Cardiac septum (tissue), 1 donor: ENCODE measurements at regions of chrX and their contacts with region 1.

Region 1: GRCh38 chrX:48801280-48802088 is at the start of gene HDAC6:
- DNase-seq: peak; percentile 97
- total RNA-seq, gene HDAC6: 33.7 TPM

Region 2: DNA sequence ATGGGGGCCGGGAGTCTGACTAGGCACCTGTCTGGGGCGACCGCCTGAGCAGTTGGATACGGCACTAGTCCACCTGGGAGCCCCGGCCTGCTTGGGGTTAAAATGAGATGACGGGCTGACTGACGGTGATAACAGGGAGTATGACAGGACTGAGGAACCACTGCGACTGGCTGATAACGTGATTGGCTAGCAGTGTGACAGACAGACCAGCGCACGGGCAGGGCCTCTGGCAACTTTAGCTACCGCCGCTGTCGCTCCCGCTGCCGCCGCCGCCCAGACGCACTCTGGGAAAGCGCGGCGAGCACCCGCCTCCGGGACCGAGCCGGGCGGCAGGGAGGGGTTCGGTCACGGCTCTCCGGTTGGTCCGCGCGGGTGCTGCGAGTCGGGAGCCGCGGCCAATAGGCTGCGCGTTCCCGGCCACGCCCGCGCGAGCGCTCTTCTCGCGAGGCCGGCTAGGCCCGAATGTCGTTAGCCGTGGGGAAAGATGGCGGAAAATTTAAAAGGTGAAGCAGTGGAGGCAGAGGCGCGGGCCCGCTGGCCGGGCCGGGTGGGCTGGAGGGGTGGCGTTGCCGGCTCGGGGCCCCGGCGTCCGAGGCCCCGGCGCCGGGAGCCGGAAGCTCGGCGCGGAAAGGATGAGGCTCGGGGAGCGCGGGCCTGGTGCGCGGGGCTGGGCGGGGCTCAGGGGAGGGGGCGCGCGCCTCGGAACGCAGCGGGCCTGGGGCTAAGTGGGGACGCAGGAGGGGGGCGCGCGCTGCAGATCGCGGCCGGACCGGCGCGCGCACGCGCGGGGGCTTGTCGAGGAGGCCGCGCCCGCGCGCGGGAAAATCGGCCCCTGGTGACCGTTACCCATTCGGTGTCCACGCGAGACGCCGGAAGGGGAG is 104.9 kb before region 1 on chrX and contains the start of gene SUV39H1:
- intact Hi-C with region 1: loop called (anchors 10 kb)
- DNase-seq: peak; percentile 94
- total RNA-seq, gene SUV39H1: 2.5 TPM

Region 3: GRCh38 chrX:48737213-48737938 is 64.1 kb before region 1 on chrX:
- intact Hi-C with region 1: loop called (anchors 5 kb)
- DNase-seq: peak; percentile 94

Region 4: DNA sequence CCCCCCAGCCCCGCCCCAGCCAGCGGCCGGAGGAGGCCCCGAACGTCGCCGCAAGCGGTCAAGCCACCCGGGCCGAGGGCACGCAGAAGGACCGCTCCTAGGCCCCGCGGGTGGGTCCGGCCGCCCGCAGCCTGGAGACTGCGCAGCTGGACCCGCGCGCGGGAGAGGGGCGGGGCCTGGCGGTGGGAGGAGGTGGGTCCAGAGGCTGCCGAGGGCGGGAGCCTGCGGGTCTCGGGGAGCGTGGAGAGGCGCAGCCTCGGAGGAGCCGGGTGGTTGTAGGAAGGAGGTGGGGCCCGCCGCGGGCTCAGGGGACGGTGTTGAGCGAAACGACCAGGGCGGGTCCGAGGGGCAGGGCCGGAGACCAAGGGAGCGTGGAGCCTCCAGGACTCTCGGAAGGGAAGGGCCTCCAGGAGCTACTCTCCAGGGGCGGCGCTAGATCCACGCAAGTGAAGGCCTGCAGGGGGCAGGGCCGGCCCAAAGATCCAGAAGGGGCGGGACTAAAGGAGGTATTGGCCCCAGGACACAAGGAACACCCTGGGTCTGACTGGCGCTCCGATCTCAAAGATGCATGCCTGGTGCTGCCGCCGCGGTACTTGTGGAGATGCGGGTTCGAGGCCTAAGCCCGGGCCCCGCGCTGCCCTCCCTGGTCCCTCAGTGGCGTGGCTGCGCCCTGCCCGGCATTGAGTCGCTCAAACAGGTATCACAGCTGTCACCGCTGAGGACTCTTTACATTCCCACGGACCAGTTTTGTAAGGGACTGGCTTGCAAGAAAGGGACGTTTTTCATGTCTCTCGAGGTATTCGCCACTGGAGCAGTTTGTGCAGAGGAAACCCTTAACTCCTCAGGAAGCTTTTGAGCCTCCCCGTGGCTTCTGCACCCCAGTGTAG is 90.2 kb after region 1 on chrX:
- intact Hi-C with region 1: loop called (anchors 5 kb)
- DNase-seq: peak; percentile 91

Region 5: DNA sequence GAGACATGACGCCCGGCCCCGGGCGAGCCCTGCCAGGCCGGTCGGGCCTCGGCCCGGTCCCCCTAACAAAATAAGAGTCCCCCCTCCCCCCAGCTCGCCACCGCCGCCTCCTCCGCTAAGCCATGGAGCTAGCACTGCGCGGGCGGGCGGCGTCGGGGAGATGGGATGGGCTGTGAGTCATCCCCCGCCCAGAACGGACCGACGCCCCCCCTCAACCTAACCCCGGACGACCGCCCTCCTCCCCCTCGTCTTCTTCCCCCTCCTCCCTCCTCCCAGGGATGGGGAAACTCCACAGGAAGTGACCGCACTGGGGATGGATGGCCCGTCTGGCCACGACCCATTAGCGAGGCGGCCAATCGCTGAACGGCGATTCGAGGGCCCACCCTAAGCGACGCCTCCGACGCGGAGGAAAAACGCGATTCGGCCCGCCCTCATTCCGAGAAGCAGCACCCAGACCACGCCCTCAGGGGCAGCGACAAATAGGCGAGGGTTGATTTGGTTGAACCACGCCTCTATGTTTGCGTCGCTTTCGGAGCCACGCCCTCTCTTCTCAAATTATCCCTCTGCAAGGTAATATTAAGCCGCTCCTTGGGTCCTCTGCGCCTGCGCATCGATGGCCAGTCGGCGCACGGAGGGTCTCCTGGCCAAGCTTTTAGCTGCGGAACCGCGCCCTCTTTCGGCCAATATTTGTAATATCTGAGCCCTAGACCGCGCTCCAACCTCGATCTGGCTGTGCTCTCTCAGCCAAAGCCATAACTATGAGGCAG is 241.9 kb after region 1 on chrX and contains the start of gene TFE3:
- intact Hi-C with region 1: loop called (anchors 5 kb)
- DNase-seq: peak; percentile 98
- total RNA-seq, gene TFE3: 21.9 TPM

Region 6: GRCh38 chrX:49106930-49107329 is 305.4 kb after region 1 on chrX:
- intact Hi-C with region 1: no loop called
- DNase-seq: no peak

Region 7: GRCh38 chrX:49316085-49316484 is 514.6 kb after region 1 on chrX:
- intact Hi-C with region 1: no loop called
- DNase-seq: no peak